Aorta (tissue), 5 donors: ENCODE measurements at regions of chrX and their contacts with region 1.

Region 1: GRCh38 chrX:41449615-41450014 is 2.5 kb downstream of the NYX start:
- DNase-seq: no peak
- ATAC-seq: peak; percentile 58
- H3K4me3 ChIP-seq: no peak overlapping the region
- H3K27ac ChIP-seq: peak overlapping the region in 1 of 2 donors; percentile 64
- H3K4me1 ChIP-seq: no peaks in the 10 kb centered on the region
- H3K27me3 ChIP-seq: no peaks in the 10 kb centered on the region

Region 2: DNA sequence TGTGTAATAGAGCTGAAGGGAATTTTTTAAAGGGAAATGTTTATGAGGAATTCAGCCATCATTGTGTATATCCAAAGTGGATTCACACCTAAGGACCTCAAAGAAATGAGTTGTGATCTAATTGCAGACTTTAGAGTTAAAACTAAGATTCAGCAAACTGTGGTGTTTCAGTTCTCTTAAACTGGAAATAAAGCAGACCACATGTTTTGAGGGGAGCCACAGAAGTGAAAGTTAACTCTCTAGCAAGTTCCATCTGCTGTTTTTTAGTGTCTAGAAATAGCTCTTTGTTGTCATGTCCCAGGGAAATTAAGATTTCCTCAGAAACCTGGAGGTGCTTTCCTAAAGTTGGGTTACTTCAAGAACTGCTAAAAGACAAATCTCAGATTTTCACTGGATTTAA is 213.0 kb before region 1 on chrX:
- intact Hi-C with region 1: no loop called
- DNase-seq: no peak
- ATAC-seq: no peak
- H3K4me3 ChIP-seq: no peak overlapping the region
- H3K27ac ChIP-seq: no peak overlapping the region
- H3K4me1 ChIP-seq: no peaks in the 10 kb centered on the region
- H3K27me3 ChIP-seq: no peaks in the 10 kb centered on the region

Region 3: DNA sequence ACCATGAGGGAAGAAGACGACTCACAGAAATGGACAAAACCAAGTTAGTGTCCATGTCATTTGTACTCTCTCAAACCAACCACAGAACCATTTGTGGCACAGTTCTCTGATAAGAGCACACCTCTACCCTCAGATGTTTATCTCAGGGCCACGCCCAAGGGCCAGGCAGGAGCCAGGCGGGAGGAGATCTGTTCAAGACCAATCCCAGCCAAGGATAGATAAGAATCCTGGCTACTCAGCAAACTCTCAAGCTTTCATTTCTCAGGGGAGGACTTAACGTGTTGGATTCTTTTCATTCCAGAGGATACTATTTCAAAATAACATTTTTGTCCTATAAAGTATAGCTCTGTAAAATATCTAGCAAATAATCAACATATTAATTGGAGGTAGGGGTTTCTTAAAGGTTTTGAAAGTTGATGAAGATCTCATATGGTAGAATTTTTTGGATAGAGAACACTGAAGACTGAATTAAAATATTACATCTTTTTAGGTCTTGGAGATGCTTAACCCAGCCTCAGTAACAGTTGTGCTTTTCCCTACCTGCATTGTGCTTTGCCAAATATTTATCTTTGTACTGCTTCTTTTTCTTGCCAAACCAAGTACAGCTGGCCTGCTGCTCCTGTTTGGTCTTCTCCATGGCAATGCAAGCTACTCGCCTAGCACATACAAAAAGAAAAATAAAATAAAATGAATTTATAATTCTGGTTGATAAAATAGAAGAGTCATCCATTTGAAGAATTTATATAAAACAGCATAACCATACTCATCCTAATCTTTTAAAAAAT is 92.7 kb after region 1 on chrX:
- intact Hi-C with region 1: loop called in 1 of 2 experiments (anchors 10 kb)
- DNase-seq: no peak
- ATAC-seq: no peak
- H3K4me3 ChIP-seq: no peak overlapping the region
- H3K27ac ChIP-seq: no peak overlapping the region
- H3K4me1 ChIP-seq: no peaks in the 10 kb centered on the region
- H3K27me3 ChIP-seq: no peaks in the 10 kb centered on the region

Region 4: DNA sequence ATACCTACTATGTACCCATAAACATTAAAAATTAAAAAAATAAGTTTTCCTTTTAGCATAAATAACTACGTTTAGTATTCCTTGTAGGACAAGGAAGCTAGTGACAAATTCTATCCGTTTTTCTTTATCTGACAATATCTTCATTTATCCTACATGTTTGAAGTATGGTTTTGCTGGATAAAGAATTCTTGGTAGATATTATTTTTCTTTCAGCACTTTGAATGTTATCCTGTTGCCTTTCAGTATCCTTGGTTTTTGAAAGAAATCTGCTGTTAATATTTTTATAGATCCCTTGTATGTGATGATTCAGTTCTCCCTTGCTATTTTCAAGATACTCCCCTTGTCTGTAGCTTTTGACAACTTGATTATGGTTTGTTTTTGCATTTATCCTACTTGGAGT is 397.1 kb after region 1 on chrX:
- intact Hi-C with region 1: no loop called
- DNase-seq: no peak
- ATAC-seq: no peak
- H3K4me3 ChIP-seq: no peak overlapping the region
- H3K27ac ChIP-seq: no peak overlapping the region
- H3K4me1 ChIP-seq: no peaks in the 10 kb centered on the region
- H3K27me3 ChIP-seq: no peaks in the 10 kb centered on the region